Activated CD4-positive, alpha-beta memory T cell treated with anti-CD3 and anti-CD28 coated beads, Interleukin-2, amount 10 ng/mL, durations not matched to agents 7 days and 5 days (primary cell): ENCODE measurements at regions of chr14 and their contacts with region 1.

Region 1: GRCh38 chr14:102375119-102375518 is 12.4 kb downstream of the TECPR2 start:
- DNase-seq: no peak
- H3K4me3 Mint-ChIP-seq: no peak overlapping the region
- H3K27ac Mint-ChIP-seq: peak overlapping the region; percentile 17
- H3K4me1 Mint-ChIP-seq: peaks cover 47% of the 10 kb centered on the region
- H3K27me3 Mint-ChIP-seq: no peaks in the 10 kb centered on the region

Region 2: DNA sequence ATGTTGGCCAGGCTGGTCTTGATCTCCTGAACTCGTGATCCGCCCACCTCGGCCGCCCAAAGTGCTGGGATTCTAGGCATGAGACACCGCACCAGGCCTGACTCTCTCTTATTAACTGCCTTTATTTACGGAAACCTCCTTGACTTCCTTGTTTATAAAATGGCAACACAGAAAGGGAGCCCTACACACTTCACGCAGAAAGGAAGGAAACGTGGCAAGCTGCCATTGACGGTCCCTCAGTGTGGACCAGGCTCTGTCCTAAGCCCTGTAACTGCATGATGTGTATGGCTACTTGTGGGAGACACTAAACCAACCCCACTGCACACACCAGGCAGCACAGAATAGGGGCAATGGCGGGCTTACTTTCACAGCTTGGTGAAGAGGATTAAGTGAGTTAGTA is 24.1 kb before region 1 on chr14:
- CTCF ChIA-PET with region 1: no interaction called
- POLR2A ChIA-PET with region 1: no interaction called
- DNase-seq: no peak
- H3K4me3 Mint-ChIP-seq: no peak overlapping the region
- H3K27ac Mint-ChIP-seq: no peak overlapping the region
- H3K4me1 Mint-ChIP-seq: no peaks in the 10 kb centered on the region
- H3K27me3 Mint-ChIP-seq: no peaks in the 10 kb centered on the region

Region 3: DNA sequence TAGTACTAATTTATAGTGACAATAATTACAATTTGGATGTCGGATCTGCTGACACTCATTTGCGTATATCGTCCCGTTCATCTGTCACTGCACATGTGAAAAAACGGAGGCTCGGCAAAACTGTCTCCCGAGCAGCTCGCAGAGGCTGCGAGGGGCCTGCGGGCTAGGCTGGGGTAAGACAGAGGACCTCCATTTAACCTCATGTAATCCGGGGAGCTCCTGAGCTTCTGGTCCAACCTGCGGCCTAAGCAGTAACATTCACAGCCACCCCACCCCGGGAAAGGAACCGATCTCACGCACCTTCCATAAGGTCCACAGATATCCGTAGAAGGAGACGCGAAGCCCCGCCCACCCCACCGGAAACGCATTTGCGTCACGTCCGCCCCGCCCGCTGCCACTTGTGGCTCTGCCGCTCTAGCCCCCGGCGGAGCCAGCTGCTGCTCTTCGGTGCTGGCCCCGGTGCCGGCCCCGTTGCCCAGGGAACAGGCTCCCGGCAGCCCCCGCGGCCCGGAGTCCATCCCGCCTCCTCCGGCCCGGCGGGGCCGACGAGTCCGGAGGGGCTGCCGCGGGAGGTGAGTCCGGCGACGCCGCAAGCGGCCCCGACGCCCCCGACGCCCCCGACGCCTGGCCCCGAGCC is 12.5 kb before region 1 on chr14 and contains the starts of genes CINP and TECPR2:
- CTCF ChIA-PET with region 1: interaction called, 5 read pairs
- POLR2A ChIA-PET with region 1: interaction called, 13 read pairs
- DNase-seq: peak; percentile 97
- H3K4me3 Mint-ChIP-seq: peak within 1 kb of the TSS; percentile 92
- H3K27ac Mint-ChIP-seq: peak within 1 kb of the TSS; percentile 88
- H3K4me1 Mint-ChIP-seq: peaks cover 27% of the 10 kb centered on the region
- H3K27me3 Mint-ChIP-seq: no peaks in the 10 kb centered on the region
- total RNA-seq, gene CINP: 27.3 to 29.8 TPM
- total RNA-seq, gene TECPR2: 12.3 to 12.5 TPM